Heart left ventricle (tissue), 16 donors: ENCODE measurements at regions of chr1 and their contacts with region 1.

Region 1: GRCh38 chr1:24847995-24848881 is 81.8 kb downstream of the RUNX3 start:
- DNase-seq: peak; percentile 92 to 96 (median 93)
- ATAC-seq: peak; percentile 89 to 97 (median 93)
- H3K4me3 ChIP-seq: peak overlapping the region in 11 of 12 donors; percentile 18 to 66 (median 57)
- H3K27ac ChIP-seq: peak overlapping the region in 11 of 12 donors; percentile 29 to 90 (median 55)
- H3K4me1 ChIP-seq: peaks cover 0 to 33% (median 13%) of the 10 kb centered on the region in 12 donors
- H3K27me3 ChIP-seq: no peaks in the 10 kb centered on the region
- CTCF ChIP-seq: peak; percentile 84 to 98 (median 94)
- POLR2A ChIP-seq: peak in 1 of 2 donors; percentile 34

Region 2: DNA sequence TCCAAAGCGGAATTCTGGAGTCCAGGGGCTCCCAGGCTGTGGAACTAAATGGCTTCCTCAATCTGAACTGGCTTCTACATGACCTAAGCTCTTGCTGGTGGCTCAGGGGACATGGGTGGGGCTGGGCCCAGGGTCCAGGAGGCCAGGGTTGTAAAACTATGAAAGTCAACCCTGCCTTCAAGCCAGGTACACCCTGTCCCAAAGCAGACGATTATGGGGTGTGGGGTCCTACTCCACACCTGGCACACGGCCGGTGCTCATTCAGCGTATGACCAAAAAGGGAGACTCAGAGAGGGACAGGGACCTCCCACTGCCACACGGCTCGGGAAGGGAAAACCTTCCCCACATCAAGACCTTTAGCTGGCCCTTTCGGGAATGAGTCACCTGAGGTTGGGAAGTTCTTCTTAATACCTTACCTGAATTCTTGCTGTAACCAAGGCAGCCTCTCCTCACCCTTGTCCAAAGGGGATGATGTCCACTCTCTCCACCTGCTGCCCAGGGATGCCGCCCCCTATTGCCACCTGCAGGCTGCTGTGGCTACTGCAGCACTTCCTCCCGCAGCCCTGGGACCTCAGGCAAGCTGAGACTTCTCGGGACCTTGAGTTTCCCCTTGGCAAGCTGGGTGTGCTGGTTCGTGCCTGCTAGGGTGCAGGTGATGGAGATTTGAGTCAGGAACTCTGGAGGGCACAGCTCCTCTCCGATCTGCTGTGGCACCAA is 49.7 kb after region 1 on chr1:
- intact Hi-C with region 1: loop called in 6 of 10 experiments (anchors 1 to 5 kb)
- DNase-seq: peak in 1 of 5 donors; percentile 44
- ATAC-seq: peak in 3 of 4 donors; percentile 58 to 71 (median 68)
- H3K4me3 ChIP-seq: no peak overlapping the region
- H3K27ac ChIP-seq: no peak overlapping the region
- H3K4me1 ChIP-seq: no peaks in the 10 kb centered on the region
- H3K27me3 ChIP-seq: peaks cover 0 to 22% (median 4%) of the 10 kb centered on the region in 9 donors
- CTCF ChIP-seq: peak; percentile 50 to 81 (median 68)
- POLR2A ChIP-seq: no peak

Region 3: GRCh38 chr1:25037174-25038074 is 189.2 kb after region 1 on chr1:
- intact Hi-C with region 1: loop called in 4 of 10 experiments (anchors 2 to 10 kb)
- DNase-seq: peak in 3 of 5 donors; percentile 29 to 65 (median 33)
- ATAC-seq: peak in 3 of 4 donors; percentile 29 to 42 (median 41)
- H3K4me3 ChIP-seq: no peak overlapping the region
- H3K27ac ChIP-seq: no peak overlapping the region
- H3K4me1 ChIP-seq: peaks cover 0 to 36% (median 0%) of the 10 kb centered on the region in 12 donors
- H3K27me3 ChIP-seq: peaks cover 0 to 17% (median 3%) of the 10 kb centered on the region in 9 donors
- CTCF ChIP-seq: peak in 11 of 12 donors; percentile 12 to 55 (median 32)
- POLR2A ChIP-seq: no peak

Region 4: DNA sequence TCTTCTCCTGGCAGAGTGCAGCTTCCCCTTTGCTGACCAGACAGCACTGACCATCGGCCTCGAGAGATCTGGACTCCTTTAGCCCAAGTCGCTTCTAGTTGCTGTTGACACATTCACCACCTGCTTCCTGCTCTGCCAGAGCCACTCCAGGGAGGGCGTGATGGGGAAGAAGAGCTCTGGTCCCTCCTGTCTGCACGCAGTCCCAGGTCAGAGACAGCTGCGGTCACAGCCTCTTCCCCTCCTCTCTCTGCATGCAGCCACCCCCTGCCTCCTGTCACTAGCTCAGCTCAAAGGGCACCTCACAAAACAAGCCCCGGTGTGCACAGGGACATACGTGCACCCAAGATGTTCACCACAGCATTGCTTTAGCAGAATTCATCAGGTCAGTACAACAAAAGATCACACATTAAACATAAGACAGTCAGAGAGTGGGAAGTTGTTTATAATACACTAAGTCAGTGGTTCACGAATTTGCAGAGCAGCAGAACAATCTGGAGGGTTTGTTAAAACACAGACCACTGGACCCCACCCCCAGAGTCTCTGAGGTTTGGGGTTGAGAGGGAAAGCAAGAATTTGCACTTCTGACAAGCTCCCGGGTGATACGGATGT is 251.2 kb after region 1 on chr1:
- intact Hi-C with region 1: loop called (anchors 2 to 10 kb)
- DNase-seq: peak in 1 of 5 donors; percentile 38
- ATAC-seq: no peak
- H3K4me3 ChIP-seq: no peak overlapping the region
- H3K27ac ChIP-seq: peak overlapping the region in 1 of 12 donors; percentile 33
- H3K4me1 ChIP-seq: peaks cover 0 to 35% (median 0%) of the 10 kb centered on the region in 12 donors
- H3K27me3 ChIP-seq: peaks cover 0 to 9% (median 0%) of the 10 kb centered on the region in 9 donors
- CTCF ChIP-seq: no peak
- POLR2A ChIP-seq: no peak